Common myeloid progenitor, CD34-positive (primary cell): ENCODE measurements at regions of chr12 and their contacts with region 1.

Region 1: DNA sequence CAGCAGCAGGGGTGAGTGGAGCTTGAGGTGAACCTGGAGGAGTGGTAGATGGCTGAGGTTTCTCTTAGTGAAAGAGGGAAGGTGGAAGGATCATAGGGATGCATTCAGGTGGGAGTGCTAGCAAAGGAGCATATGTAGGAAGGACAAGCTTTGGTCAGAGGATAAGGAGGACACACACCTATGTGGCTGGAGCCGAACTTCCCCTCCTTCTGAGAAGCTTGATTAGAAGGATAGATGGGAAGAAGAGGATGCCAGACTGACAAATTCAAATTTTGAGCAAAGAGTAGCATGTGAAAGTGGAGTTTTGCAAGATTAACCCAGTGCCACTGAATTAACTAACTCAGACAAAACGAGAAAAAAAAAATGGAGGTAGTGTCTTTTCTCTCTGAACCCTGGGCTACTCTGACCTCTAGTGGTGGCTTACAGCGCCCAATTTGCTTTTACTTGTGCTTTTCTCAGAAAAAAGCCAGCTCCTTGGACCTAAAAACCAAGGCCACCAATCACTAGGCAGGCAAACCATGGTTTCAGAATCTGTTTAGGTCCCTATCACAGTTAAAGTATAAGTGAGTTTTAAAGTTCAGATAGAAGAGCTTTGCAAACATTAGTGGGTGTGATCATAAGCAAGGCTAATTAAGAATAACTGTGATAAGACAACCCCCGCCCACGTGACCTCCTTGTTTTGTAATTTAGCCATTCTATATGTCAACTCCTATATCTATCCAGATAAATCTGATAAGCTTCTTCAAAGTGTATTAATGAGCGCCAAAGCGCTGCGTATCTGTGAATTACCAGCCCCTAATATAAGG is 15.5 kb downstream of the EMP1 start:
- DNase-seq: peak; percentile 74 to 91 (median 84)
- H3K4me3 ChIP-seq: no peak overlapping the region
- H3K27ac ChIP-seq: no peak overlapping the region
- H3K4me1 ChIP-seq: peaks cover 0 to 47% (median 39%) of the 10 kb centered on the region in 4 experiments
- H3K27me3 ChIP-seq: no peaks in the 10 kb centered on the region

Region 2: DNA sequence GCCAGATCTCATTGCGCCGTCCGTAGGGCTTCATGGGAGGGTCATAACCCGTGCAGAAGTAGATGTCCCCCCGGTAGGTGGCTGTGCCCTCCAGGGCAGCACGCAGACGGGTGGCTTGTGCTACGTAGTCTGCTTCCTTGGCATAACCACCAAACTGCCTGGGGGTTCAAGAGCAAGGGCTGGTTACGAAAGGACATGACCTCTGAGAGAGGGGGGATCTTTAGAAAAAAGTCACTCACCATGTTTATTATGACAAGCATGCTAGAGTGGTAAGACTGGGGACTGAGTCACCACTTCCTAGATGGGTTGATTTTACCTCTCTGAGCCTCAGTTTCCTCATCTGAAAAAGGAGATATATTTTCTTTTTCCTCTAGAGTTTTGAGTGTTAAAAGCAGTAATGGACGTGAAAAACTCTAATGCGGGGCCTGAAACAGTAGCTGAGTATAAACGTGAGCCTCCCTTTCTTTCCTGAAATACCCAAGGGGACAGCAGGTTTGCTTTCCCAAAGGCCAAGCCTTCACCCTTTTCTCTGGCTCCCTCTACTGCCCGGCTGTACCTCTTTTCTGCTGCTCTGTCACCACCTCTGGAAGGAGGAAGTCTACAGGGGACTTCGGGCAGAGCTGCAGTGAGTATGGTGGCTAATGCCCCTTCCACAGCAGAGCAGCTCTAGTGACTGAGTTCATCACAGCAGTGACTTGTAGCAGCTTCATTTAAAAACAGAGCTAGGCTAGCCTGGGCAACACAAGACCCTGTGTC is 236.6 kb before region 1 on chr12:
- CTCF ChIA-PET with region 1: interaction called, 23 read pairs
- POLR2A ChIA-PET with region 1: no interaction called
- DNase-seq: peak; percentile 30 to 41 (median 39)
- H3K4me3 ChIP-seq: no peak overlapping the region
- H3K27ac ChIP-seq: no peak overlapping the region
- H3K4me1 ChIP-seq: no peaks in the 10 kb centered on the region
- H3K27me3 ChIP-seq: no peaks in the 10 kb centered on the region

Region 3: GRCh38 chr12:13044002-13044905 is 167.8 kb before region 1 on chr12 and contains the start of gene FAM234B:
- CTCF ChIA-PET with region 1: interaction called, 13 read pairs
- POLR2A ChIA-PET with region 1: no interaction called
- DNase-seq: peak; percentile 64 to 77 (median 73)
- H3K4me3 ChIP-seq: peak within 1 kb of the TSS; percentile 78 to 97 (median 93)
- H3K27ac ChIP-seq: no peak within 1 kb of the TSS
- H3K4me1 ChIP-seq: peaks cover 2 to 12% (median 6%) of the 10 kb centered on the region in 4 experiments
- H3K27me3 ChIP-seq: no peaks in the 10 kb centered on the region

Region 4: DNA sequence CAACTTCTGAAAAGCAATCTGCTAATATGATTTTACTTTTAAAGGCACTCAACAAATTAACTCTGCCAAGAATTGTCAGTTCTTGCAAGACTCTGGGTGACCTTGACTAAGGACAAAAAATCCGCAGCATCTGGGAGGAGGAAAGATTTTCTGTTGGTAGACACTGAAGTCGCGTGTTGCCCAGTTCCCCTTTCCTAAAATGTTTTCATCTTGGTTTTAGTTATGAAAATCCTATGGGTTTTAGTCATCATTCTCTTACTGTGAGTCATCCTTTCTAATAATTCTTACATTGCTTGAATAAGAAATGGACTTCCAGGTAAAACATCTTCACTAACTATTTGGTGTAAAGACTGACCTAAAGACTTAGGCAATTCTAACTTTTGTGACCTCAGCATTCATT is 117.7 kb before region 1 on chr12:
- CTCF ChIA-PET with region 1: interaction called, 47 read pairs
- POLR2A ChIA-PET with region 1: no interaction called
- DNase-seq: peak in 2 of 3 donors; percentile 67 to 74
- H3K4me3 ChIP-seq: no peak overlapping the region
- H3K27ac ChIP-seq: no peak overlapping the region
- H3K4me1 ChIP-seq: peaks cover 9 to 36% (median 30%) of the 10 kb centered on the region in 4 experiments
- H3K27me3 ChIP-seq: no peaks in the 10 kb centered on the region

Region 5: DNA sequence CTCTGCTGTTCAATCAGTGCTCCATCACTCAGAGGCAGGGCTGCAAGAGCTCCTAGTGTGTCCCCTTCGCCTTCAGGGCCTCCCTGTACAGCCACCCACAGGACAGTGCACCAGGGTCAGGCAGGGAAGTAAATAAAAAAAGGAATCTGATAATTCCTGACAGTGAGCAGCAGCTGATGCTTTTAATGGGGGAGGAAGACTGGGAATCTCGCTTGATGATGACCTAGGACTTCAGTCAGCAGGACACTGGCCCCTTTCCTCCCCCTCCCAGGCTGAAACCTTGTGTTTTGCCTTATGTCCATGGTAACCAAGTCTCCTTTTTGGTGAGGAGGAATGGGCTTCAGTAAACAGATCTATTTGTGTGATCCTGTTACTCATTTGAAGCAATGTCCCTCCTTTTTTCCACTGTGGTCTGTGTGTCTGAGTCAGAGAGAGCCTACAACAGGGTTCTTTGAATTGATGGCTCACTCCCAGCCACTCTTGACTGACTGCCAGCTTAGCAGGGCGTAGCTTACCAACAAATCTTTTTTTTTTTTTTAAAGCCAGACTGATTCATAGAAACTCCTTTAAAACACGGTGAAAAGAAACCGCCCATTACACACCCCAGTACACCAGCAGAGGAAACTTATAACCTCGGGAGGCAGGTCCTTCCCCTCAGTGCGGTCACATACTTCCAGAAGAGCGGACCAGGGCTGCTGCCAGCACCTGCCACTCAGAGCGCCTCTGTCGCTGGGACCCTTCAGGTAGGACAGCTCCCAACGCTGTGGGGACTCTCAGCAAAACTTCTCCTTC is 15.7 kb before region 1 on chr12 and contains the start of gene EMP1:
- CTCF ChIA-PET with region 1: interaction called, 13 read pairs
- POLR2A ChIA-PET with region 1: no interaction called
- DNase-seq: peak; percentile 91 to 98 (median 98)
- H3K4me3 ChIP-seq: peak within 1 kb of the TSS; percentile 16 to 95 (median 72)
- H3K27ac ChIP-seq: peak within 1 kb of the TSS; percentile 22 to 85
- H3K4me1 ChIP-seq: peaks cover 18 to 74% (median 63%) of the 10 kb centered on the region in 4 experiments
- H3K27me3 ChIP-seq: no peaks in the 10 kb centered on the region

Region 6: DNA sequence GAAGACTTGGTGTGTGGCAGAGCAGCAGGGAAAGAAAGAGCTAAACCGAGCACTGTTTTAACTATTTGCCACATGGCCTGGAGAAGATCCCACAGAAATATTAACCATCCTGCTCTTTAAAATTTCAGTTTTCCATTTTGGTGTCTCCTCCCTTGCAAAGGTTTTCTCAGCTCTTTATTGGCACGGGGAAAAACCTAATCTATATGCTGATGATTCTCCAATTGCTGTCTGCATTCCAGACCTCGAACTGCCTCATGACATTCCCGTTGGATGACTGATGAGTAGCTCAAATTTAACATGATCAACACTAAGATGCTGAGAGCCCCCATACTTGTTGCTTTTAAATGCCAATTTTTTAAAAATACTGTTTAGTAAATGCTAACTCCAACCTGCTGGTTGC is 99.5 kb after region 1 on chr12:
- CTCF ChIA-PET with region 1: no interaction called
- POLR2A ChIA-PET with region 1: no interaction called
- DNase-seq: no peak
- H3K4me3 ChIP-seq: no peak overlapping the region
- H3K27ac ChIP-seq: no peak overlapping the region
- H3K4me1 ChIP-seq: no peaks in the 10 kb centered on the region
- H3K27me3 ChIP-seq: peaks cover 0 to 11% (median 0%) of the 10 kb centered on the region in 5 experiments